Natural killer cell (primary cell): ENCODE measurements at regions of chr18 and their contacts with region 1.

Region 1: DNA sequence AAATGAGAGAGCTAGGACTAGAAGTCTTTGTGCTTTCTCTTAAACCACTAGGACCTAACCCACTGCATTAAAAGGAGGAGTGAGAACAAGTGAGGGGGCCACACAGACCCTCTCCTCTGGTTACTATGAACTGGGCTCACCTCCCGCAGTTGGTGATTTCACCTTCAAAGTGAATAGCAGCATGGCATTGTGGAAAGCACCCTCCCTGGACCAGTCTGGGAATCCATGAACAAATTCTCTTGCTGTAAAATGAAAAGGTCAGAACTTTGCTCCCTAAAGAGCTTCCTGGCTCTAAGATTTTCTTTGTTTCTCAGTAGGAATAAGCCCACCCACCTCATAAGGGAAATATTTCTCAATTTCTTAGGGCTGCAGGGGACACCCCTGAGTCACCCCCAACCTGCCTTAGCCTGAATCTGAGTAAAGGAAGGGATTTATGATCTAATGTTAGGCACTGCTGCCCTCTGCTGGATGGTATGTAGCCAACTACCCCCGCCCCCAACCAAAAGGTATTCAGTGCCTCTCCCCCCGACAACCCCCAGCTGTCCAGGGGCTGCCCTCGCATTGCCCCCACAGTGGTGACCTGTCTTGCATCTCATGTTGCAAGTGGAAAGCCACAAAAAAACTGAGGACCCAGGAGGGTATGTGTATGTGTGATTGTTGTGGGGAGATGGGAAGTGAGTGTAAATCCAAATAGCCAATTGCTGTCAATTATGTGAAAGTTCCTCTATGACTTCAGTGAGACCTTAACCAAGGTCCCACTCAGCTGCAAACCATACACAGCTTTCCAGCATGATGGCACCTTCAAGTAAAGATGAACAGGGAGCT is 230.9 kb upstream of the SLC14A2 start:
- DNase-seq: peak; percentile 34 to 63
- ATAC-seq: peak; percentile 65 to 77 (median 67)
- H3K4me3 ChIP-seq: no peak overlapping the region
- H3K4me3 Mint-ChIP-seq: no peak overlapping the region
- H3K27ac ChIP-seq: no peak overlapping the region
- H3K27ac Mint-ChIP-seq: no peak overlapping the region
- H3K4me1 ChIP-seq: no peaks in the 10 kb centered on the region
- H3K4me1 Mint-ChIP-seq: peaks cover 0 to 13% of the 10 kb centered on the region in 2 donors
- H3K27me3 ChIP-seq: peaks cover 4% of the 10 kb centered on the region
- H3K27me3 Mint-ChIP-seq: peaks cover 13 to 32% of the 10 kb centered on the region in 2 donors
- CTCF ChIP-seq: peak; percentile 69

Region 2: GRCh38 chr18:43620936-43621335 is 1763.4 kb before region 1 on chr18:
- intact Hi-C with region 1: loop called (anchors 1 kb)
- DNase-seq: peak in 1 of 2 donors; percentile 22
- ATAC-seq: peak in 1 of 3 donors; percentile 54
- H3K4me3 ChIP-seq: no peak overlapping the region
- H3K4me3 Mint-ChIP-seq: no peak overlapping the region
- H3K27ac ChIP-seq: no peak overlapping the region
- H3K27ac Mint-ChIP-seq: no peak overlapping the region
- H3K4me1 ChIP-seq: no peaks in the 10 kb centered on the region
- H3K4me1 Mint-ChIP-seq: no peaks in the 10 kb centered on the region
- H3K27me3 ChIP-seq: no peaks in the 10 kb centered on the region
- H3K27me3 Mint-ChIP-seq: no peaks in the 10 kb centered on the region
- CTCF ChIP-seq: peak; percentile 49

Region 3: DNA sequence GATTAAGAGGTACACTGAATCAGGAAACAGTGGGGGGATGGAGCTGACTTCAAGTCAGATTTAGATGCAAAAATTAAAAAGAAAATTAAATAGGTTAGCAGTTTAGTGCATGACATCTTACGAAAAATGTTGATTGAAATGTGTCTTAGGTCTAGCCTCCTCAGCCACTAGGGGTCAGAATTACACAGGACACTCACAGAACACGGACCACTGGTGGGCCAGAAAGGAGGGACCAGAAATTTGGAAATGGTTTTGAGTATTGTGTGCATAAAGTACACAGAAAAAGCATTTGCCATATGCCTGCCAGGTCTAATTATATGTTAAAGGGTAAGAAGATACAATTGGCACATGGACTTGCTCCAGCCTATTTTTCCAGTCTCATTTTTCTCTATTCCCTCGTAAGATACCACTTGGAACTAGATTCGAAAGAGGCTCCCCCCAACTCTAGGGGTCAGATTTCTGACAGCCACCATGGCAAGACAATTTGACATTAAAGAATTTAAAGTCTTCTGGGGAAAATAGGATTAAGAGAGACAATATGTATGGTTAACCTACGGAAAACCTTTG is 1253.9 kb before region 1 on chr18:
- intact Hi-C with region 1: loop called (anchors 1 kb)
- DNase-seq: peak in 1 of 2 donors; percentile 16
- ATAC-seq: peak; percentile 40 to 68 (median 50)
- H3K4me3 ChIP-seq: no peak overlapping the region
- H3K4me3 Mint-ChIP-seq: no peak overlapping the region
- H3K27ac ChIP-seq: no peak overlapping the region
- H3K27ac Mint-ChIP-seq: no peak overlapping the region
- H3K4me1 ChIP-seq: no peaks in the 10 kb centered on the region
- H3K4me1 Mint-ChIP-seq: peaks cover 0 to 5% of the 10 kb centered on the region in 2 donors
- H3K27me3 ChIP-seq: no peaks in the 10 kb centered on the region
- H3K27me3 Mint-ChIP-seq: peaks cover 2 to 33% of the 10 kb centered on the region in 2 donors
- CTCF ChIP-seq: peak; percentile 57